CD4-positive, alpha-beta memory T cell (primary cell): ENCODE measurements at regions of chr14 and their contacts with region 1.

Region 1: DNA sequence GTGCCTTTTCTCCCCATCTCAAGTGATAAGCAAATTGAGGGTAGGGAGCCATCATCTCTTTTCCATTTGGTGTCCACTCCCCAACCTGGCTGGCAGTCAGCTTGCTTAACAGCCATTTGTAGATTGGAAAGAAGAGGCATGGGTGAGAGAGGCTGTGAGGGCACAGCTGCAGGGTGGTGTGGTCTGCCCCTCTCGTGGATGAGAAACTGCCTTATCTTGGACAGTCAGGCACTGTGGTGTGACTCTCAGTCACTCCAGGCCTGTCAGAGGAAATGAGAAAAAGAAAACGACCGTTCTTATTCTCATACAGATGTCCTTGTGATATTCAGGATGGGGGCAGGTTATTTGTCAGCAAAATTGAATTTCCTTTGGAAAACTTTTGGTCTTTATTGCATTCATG is 65.1 kb upstream of the SRSF5 start:
- DNase-seq: no peak
- H3K4me3 ChIP-seq: no peak overlapping the region
- H3K4me3 Mint-ChIP-seq: no peak overlapping the region
- H3K27ac ChIP-seq: no peak overlapping the region
- H3K27ac Mint-ChIP-seq: peak overlapping the region in 2 of 7 donors; percentile 47 to 58
- H3K4me1 ChIP-seq: peaks cover 44% of the 10 kb centered on the region
- H3K4me1 Mint-ChIP-seq: peaks cover 47 to 88% (median 56%) of the 10 kb centered on the region in 4 donors
- H3K27me3 ChIP-seq: no peaks in the 10 kb centered on the region
- H3K27me3 Mint-ChIP-seq: no peaks in the 10 kb centered on the region

Region 2: DNA sequence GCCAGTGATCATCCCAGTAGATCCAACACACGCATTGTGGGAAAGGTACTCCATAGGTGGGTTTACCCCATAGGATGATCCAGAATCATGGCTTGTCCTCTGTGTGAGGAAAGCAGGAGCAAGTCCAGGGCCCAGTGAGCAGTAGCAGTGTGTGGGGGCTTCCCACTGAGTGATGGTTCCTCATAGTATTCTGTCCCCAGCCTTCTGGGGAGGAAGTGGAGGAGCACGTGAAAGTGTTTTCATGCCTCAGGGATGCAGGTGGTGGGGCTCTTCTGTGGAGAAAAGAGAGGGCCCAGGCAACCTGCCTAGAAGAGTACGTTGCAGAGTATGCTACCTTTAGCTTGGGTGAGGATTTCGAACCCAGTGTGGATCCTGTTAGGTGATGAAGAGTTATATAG is 33.9 kb before region 1 on chr14:
- CTCF ChIA-PET with region 1: interaction called, 3 read pairs
- POLR2A ChIA-PET with region 1: no interaction called
- intact Hi-C with region 1: loop called (anchors 5 kb)
- DNase-seq: no peak
- H3K4me3 ChIP-seq: peak overlapping the region in 1 of 2 donors; percentile 23
- H3K4me3 Mint-ChIP-seq: peak overlapping the region; percentile 57 to 83 (median 70)
- H3K27ac ChIP-seq: peak overlapping the region; percentile 40
- H3K27ac Mint-ChIP-seq: peak overlapping the region; percentile 57 to 93 (median 83)
- H3K4me1 ChIP-seq: peaks cover 95% of the 10 kb centered on the region
- H3K4me1 Mint-ChIP-seq: peaks cover 74 to 98% (median 87%) of the 10 kb centered on the region in 4 donors
- H3K27me3 ChIP-seq: no peaks in the 10 kb centered on the region
- H3K27me3 Mint-ChIP-seq: no peaks in the 10 kb centered on the region

Region 3: GRCh38 chr14:69850086-69850735 is 148.4 kb after region 1 on chr14:
- CTCF ChIA-PET with region 1: no interaction called
- POLR2A ChIA-PET with region 1: no interaction called
- intact Hi-C with region 1: no loop called
- DNase-seq: no peak
- H3K4me3 ChIP-seq: no peak overlapping the region
- H3K4me3 Mint-ChIP-seq: no peak overlapping the region
- H3K27ac ChIP-seq: no peak overlapping the region
- H3K27ac Mint-ChIP-seq: no peak overlapping the region
- H3K4me1 ChIP-seq: no peaks in the 10 kb centered on the region
- H3K4me1 Mint-ChIP-seq: no peaks in the 10 kb centered on the region
- H3K27me3 ChIP-seq: no peaks in the 10 kb centered on the region
- H3K27me3 Mint-ChIP-seq: peaks cover 9 to 14% of the 10 kb centered on the region in 2 donors